ENCODE measurements at regions of chr4 and their contacts with region 1.

Region 1: DNA sequence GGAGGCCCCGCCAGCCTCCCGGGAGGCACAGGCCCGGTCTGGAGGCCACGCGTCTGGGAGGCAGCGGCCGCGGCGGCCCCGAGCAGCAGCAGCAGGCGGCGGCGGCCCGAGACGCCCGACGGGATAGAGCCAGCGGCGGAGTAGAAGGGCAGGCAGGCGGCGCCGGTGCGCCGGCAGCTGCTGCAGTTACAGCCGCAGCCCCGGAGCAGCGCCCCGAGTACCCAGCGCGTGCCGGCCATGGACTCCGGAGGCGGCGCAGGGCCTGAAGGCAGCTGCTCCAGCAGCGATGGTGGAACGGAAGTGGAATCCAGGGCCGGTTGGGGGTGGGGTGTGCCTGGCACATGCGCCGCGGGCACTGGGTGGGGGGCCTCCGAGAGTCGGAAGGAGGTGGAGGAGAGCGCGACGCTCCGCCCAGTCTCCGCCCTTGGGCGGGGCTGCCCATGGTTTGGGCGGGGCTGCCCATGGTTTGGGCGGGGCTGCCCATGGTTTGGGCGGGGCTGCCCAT is at the start of gene GRSF1:
- DNase-seq: peak; percentile 92
- H3K4me3 ChIP-seq: peak within 1 kb of the TSS; percentile 89 to 90
- H3K27ac ChIP-seq: peak within 1 kb of the TSS; percentile 86 to 89
- H3K4me1 ChIP-seq: no peaks in the 10 kb centered on the region
- H3K27me3 ChIP-seq: no peaks in the 10 kb centered on the region
- CTCF ChIP-seq: peak in 2 of 4 experiments; percentile 3 to 29
- POLR2A ChIP-seq: peak; percentile 73
- total RNA-seq, gene GRSF1: 56.6 to 58.3 TPM

Region 2: DNA sequence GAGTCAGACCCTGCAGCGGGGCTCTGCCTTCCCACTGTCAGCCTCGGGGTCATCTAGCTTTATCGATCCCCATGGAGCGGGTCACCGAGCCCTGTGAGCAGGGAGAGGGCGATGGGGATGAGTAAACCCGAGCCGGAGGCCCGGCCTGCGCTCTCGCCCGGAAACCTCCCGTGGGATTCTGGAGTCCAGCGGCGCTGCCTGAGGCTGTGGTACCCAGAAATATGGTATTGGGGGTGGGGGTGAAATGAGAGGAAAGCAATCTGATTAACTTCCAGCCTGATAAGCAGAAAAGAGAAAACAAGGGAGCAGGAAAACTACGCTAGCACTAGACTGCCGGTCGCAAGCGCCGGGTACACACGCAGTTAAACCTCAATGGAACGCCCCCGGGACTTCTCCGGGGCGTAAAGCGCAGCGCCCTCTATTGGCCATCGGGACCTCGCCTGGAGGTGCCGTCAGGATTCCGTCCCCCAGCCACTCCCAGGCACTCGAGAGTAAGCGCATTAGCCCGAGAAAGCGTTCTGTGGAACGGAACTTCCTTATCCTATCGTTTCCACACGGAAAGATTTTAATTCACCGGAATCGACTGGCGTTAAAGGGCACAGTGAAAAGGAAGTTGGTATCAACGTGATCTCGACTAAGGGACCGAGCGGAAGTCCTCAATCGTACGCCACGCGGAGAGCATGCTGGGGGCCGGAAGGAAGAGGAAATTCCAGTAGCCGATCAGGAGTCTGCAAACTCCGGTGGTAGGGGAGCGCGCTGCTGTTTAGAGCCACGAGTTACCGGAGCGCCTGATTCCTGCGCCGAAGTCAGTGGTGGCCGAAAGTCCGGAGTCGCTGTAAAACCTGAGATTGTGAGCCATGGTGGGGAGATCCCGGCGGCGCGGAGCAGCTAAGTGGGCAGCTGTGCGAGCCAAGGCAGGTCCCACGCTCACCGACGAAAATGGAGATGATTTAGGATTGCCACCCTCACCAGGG is 151.5 kb before region 1 on chr4 and contains the start of gene UTP3:
- intact Hi-C with region 1: loop called (anchors 10 kb)
- DNase-seq: peak; percentile 95
- H3K4me3 ChIP-seq: peak within 1 kb of the TSS; percentile 65 to 82
- H3K27ac ChIP-seq: peak within 1 kb of the TSS; percentile 88 to 95
- H3K4me1 ChIP-seq: peaks cover 6% of the 10 kb centered on the region
- H3K27me3 ChIP-seq: no peaks in the 10 kb centered on the region
- CTCF ChIP-seq: peak; percentile 92 to 98 (median 97)
- POLR2A ChIP-seq: peak; percentile 51
- total RNA-seq, gene UTP3: 13.4 to 19.7 TPM

Region 3: GRCh38 chr4:70895811-70896491 is 56.3 kb after region 1 on chr4:
- intact Hi-C with region 1: loop called (anchors 10 kb)
- DNase-seq: no peak
- H3K4me3 ChIP-seq: no peak overlapping the region
- H3K27ac ChIP-seq: no peak overlapping the region
- H3K4me1 ChIP-seq: no peaks in the 10 kb centered on the region
- H3K27me3 ChIP-seq: no peaks in the 10 kb centered on the region
- CTCF ChIP-seq: no peak
- POLR2A ChIP-seq: no peak

Region 4: DNA sequence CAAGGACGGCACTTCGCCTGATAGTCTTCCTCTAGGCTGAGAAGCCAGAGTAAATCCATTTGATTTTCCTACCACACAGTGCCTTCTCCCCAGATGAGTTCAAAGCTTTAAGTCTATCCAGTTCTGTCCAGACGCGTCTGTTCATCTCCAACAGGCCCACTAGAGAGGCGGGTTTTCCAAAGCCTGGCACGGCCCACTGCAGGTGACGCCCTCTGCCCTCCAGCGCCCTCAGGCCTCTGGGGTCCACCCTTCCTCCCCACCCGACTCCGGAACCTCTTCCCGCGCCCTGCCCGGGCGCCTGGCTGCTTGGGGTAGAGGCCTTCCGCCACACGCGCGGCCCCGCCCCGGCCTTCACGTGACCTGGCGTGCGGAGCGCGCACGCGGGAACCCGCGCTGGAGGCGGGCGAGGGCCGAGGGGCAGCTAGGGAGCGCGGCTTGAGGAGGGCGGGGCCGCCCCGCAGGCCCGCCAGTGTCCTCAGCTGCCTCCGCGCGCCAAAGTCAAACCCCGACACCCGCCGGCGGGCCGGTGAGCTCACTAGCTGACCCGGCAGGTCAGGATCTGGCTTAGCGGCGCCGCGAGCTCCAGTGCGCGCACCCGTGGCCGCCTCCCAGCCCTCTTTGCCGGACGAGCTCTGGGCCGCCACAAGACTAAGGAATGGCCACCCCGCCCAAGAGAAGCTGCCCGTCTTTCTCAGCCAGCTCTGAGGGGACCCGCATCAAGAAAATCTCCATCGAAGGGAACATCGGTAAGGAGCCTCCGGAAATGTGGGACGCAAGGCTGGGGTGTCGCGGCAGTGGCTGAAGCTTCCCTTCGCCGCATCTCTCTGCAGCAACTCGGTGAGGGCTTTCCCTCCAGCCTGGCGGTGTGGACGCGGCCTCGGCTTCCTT is 153.8 kb after region 1 on chr4 and contains the start of gene DCK:
- intact Hi-C with region 1: loop called (anchors 2 kb)
- DNase-seq: peak; percentile 86
- H3K4me3 ChIP-seq: peak within 1 kb of the TSS; percentile 68 to 73
- H3K27ac ChIP-seq: peak within 1 kb of the TSS; percentile 84 to 89
- H3K4me1 ChIP-seq: no peaks in the 10 kb centered on the region
- H3K27me3 ChIP-seq: no peaks in the 10 kb centered on the region
- CTCF ChIP-seq: peak in 1 of 4 experiments; percentile 34
- POLR2A ChIP-seq: peak; percentile 73
- total RNA-seq, gene DCK: 14.0 to 17.0 TPM

Measured in prostate gland (tissue), 2 donors.